B cell (primary cell): ENCODE measurements at regions of chr17 and their contacts with region 1.

Region 1: DNA sequence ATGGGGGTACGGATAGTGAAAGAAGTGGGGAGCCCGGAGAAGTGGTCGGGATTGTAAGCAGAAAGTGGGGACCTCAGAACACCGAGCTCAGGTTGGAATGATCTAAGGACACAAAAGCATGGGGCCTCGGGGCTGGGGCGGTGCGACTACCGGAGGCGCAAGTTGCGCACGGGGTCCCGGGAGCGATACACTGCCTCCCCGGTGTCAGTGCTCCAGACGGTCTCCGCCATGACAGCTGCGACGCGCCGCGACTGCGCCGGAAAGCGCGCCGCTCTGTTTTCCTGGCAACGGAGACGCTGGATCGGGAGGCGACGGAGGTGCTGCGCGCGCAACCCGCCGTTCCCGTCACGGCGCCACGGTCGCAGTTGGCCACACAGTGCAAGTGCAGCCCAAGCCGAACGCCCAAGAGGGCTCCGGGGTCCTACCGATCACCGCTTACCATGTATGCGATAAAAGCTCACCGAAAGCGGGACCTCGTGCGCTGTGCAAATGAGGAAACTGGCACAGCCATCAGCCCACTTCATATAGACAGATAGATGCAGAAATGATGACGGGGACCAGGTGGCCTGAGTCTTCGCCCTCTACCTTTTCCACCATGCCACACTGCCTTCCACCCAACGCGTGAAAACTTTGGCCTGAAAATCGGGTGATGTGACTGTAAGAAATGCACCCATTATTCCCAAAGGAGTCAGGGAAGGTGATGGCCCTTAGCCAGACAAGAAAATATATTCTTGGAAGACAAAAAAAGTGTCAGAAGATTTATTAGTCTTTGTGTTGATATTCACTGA is at the start of gene MKS1:
- DNase-seq: peak; percentile 95
- ATAC-seq: peak; percentile 97
- H3K4me3 ChIP-seq: peak within 1 kb of the TSS; percentile 38 to 84 (median 68)
- H3K4me3 Mint-ChIP-seq: peak within 1 kb of the TSS; percentile 94
- H3K27ac ChIP-seq: peak within 1 kb of the TSS; percentile 70 to 86
- H3K27ac Mint-ChIP-seq: peak within 1 kb of the TSS; percentile 83
- H3K4me1 ChIP-seq: peaks cover 10 to 19% of the 10 kb centered on the region in 2 donors
- H3K4me1 Mint-ChIP-seq: peaks cover 34% of the 10 kb centered on the region
- H3K27me3 ChIP-seq: no peaks in the 10 kb centered on the region
- H3K27me3 Mint-ChIP-seq: peaks cover 2% of the 10 kb centered on the region
- CTCF ChIP-seq: peak; percentile 75
- total RNA-seq, gene MKS1: 16.3 and 19.6 TPM in 2 replicates

Region 2: DNA sequence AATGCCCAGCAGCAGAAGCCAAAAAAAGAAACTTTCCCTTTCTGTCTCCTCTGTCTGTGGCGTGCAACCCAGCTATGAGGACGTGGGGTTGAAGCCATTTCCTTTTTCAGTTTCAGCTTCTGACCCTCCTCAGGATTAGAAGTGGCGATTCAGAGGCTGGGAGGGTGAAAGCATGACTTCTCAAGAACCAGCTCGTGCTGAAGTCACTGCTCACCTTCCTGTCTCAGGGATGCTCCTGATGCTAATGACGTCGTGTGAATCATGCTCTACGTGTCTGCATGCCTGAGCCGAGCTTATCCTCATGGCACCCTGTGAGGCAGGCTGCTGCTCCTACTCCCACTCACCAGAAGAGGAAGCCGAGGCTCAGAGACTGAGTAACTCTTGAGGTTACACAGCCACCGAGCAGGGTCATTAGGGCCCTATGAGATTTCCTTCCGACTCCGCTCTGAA is 13.5 kb after region 1 on chr17:
- CTCF ChIA-PET with region 1: interaction called, 6 read pairs
- POLR2A ChIA-PET with region 1: no interaction called
- intact Hi-C with region 1: loop called (anchors 1 kb)
- DNase-seq: peak; percentile 64
- ATAC-seq: peak; percentile 62
- H3K4me3 ChIP-seq: peak overlapping the region in 1 of 5 experiments; percentile 2
- H3K4me3 Mint-ChIP-seq: peak overlapping the region; percentile 78
- H3K27ac ChIP-seq: peak overlapping the region; percentile 69 to 81
- H3K27ac Mint-ChIP-seq: peak overlapping the region; percentile 95
- H3K4me1 ChIP-seq: peaks cover 20 to 25% of the 10 kb centered on the region in 2 donors
- H3K4me1 Mint-ChIP-seq: peaks cover 32% of the 10 kb centered on the region
- H3K27me3 ChIP-seq: peaks cover 0 to under 1% (median 0%) of the 10 kb centered on the region in 4 experiments
- H3K27me3 Mint-ChIP-seq: peaks cover 15% of the 10 kb centered on the region
- CTCF ChIP-seq: no peak

Region 3: GRCh38 chr17:58947824-58948223 is 728.6 kb after region 1 on chr17:
- CTCF ChIA-PET with region 1: no interaction called
- POLR2A ChIA-PET with region 1: no interaction called
- intact Hi-C with region 1: no loop called
- DNase-seq: no peak
- ATAC-seq: no peak
- H3K4me3 ChIP-seq: no peak overlapping the region
- H3K4me3 Mint-ChIP-seq: no peak overlapping the region
- H3K27ac ChIP-seq: no peak overlapping the region
- H3K27ac Mint-ChIP-seq: no peak overlapping the region
- H3K4me1 ChIP-seq: peaks cover 0 to 4% of the 10 kb centered on the region in 2 donors
- H3K4me1 Mint-ChIP-seq: peaks cover 3% of the 10 kb centered on the region
- H3K27me3 ChIP-seq: no peaks in the 10 kb centered on the region
- H3K27me3 Mint-ChIP-seq: no peaks in the 10 kb centered on the region
- CTCF ChIP-seq: no peak